Right lobe of liver (tissue), 6 donors: ENCODE measurements at regions of chr11 and their contacts with region 1.

Region 1: GRCh38 chr11:36746886-36747710 is 149.1 kb upstream of the RAG2 start:
- DNase-seq: peak; percentile 77 to 91 (median 81)
- ATAC-seq: peak; percentile 100
- H3K4me3 ChIP-seq: no peak overlapping the region
- H3K27ac ChIP-seq: no peak overlapping the region
- H3K4me1 ChIP-seq: peaks cover 0 to 3% (median 0%) of the 10 kb centered on the region in 4 donors
- H3K27me3 ChIP-seq: no peaks in the 10 kb centered on the region
- CTCF ChIP-seq: peak; percentile 97 to 100 (median 98)
- POLR2A ChIP-seq: no peak

Region 2: GRCh38 chr11:36594316-36594989 is 152.6 kb before region 1 on chr11 and contains the start of gene IFTAP:
- intact Hi-C with region 1: no loop called
- DNase-seq: peak; percentile 49 to 69 (median 67)
- ATAC-seq: peak; percentile 100
- H3K4me3 ChIP-seq: peak within 1 kb of the TSS; percentile 75 to 81 (median 77)
- H3K27ac ChIP-seq: peak within 1 kb of the TSS in 1 of 3 donors; percentile 6
- H3K4me1 ChIP-seq: peaks cover 0 to 8% (median 2%) of the 10 kb centered on the region in 4 donors
- H3K27me3 ChIP-seq: peaks cover 0 to 3% of the 10 kb centered on the region in 2 donors
- CTCF ChIP-seq: no peak
- POLR2A ChIP-seq: no peak
- total RNA-seq, gene IFTAP: 5.2 to 11.4 (median 8.6) TPM

Region 3: DNA sequence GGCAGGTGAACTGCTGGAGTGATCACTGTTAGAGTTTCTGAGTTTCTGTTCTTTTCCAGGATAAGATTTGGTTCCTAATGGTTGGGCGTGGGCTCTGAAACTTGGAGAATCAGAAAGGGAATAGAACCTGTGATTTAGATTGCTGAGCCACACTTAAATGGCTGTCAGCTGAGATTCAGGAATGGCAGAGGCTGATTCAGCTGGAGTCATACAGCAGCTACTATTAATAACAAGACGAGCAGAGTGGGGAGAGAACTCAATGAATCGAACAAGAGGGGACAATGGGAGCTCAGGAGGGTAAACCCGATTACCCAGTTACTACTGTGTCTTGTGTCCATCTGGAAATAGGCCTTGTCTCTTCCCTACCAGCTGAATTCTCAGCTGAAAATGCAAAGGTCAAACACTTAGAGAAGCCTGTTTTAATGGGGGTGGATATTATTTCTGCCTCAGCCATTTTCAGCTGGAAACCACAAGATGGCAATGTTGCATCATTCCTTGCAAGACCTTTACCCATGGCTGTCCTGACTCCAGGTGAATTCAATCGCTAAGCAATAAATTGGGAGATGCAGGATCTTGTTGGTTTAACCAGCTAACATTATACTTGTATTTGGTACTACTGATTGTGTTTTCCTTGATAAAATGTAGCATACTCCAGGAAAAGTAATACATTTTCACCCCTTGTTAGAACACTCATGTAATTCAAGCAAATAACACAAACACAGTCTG is 44.6 kb before region 1 on chr11:
- intact Hi-C with region 1: loop called in 1 of 2 experiments (anchors 5 kb)
- DNase-seq: no peak
- ATAC-seq: peak; percentile 94 to 97 (median 96)
- H3K4me3 ChIP-seq: no peak overlapping the region
- H3K27ac ChIP-seq: no peak overlapping the region
- H3K4me1 ChIP-seq: no peaks in the 10 kb centered on the region
- H3K27me3 ChIP-seq: no peaks in the 10 kb centered on the region
- CTCF ChIP-seq: peak; percentile 74 to 86 (median 83)
- POLR2A ChIP-seq: no peak